ENCODE measurements at regions of chr7 and their contacts with region 1.

Region 1: DNA sequence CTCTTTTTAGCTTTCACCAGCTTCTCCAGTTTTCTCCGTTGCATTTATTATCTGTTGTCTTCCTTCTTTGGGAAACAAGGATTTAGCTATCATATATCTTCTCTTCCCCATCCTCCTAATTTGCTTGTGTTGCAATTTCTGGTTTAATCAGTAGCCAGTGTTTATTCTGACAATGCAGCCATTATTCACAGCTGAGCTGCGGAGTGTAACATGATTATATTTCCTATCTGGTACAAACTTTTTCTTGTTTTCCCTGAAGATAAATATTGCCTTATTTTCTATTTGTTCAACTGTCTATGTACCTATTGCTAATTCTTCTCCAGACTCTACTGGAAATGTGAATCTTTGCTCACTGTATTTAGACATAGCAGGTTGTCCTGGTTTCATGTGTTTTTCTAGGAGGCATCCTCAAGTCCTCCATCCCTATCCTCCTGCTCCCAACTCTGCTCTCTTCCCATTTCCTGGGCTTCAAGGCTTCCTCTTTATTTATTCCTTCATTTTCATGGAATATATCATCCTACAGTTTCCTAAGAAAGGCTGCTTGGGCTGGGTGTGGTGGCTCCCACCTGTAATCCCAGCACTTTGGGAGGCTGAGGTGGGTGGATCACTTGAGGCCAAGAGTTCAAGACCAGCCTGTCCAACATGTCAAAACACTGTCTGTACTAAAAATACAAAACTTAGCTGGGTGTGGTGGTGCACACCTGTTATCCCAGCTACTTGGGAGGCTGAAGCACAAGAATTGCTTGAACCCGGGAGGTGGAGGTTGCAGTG is 72.4 kb upstream of the KDM7A start:
- DNase-seq: no peak
- ATAC-seq: no peak
- H3K4me3 ChIP-seq: no peak overlapping the region
- H3K4me3 Mint-ChIP-seq: no peak overlapping the region
- H3K27ac ChIP-seq: no peak overlapping the region
- H3K27ac Mint-ChIP-seq: no peak overlapping the region
- H3K4me1 ChIP-seq: peaks cover 22% of the 10 kb centered on the region
- H3K4me1 Mint-ChIP-seq: peaks cover 23 to 24% of the 10 kb centered on the region in 2 donors
- H3K27me3 ChIP-seq: no peaks in the 10 kb centered on the region
- H3K27me3 Mint-ChIP-seq: peaks cover 0 to 3% of the 10 kb centered on the region in 2 donors
- CTCF ChIP-seq: no peak

Region 2: DNA sequence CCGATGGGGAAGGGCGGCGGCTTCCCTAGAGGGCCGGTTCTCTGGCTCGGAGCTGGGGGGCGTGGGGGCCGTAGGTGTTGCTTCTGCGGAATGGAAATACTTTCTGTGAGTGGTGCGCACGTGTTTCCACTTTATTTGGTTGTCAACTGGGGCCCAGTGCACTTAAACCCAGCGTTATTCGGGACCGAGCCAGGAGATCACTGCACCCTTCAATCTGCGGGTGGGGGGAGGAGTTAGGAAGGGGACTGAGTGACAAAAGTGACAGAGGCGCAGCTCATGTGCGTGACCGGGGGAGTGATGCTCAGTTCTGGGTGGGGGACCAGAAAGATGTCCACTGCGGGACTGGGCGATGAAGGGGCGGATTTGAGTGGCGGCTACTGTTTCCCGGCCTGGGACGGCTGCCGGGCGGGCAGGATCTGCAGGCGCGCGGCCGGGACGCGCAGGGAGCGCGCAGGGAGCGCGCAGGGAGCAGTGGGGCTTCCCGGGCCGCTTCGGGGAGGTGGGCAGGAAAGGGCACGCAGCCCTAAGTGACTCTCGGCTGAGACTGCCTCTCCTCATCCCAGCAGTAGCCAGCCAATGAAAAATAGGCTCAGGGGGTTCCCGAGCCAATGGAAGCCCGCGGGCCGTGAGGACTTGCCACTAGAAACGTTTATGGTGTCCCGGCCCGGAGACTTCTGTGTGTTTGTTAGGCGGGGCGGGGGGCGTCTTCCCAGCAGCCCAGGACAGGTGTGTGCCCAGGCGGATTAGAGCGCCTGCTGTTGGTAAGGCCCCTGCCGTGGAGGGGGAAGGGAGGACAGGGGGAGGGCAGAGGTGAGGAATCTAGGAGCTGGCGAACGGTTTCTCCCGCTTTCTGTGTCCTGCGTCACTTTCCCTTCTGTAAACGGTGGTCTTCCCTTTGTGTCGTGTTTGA is 18.1 kb before region 1 on chr7:
- intact Hi-C with region 1: loop called (anchors 2 kb)
- DNase-seq: peak; percentile 40 to 78
- ATAC-seq: peak; percentile 18 to 39 (median 35)
- H3K4me3 ChIP-seq: peak overlapping the region; percentile 55
- H3K4me3 Mint-ChIP-seq: peak overlapping the region; percentile 93
- H3K27ac ChIP-seq: peak overlapping the region; percentile 65
- H3K27ac Mint-ChIP-seq: peak overlapping the region; percentile 94 to 98
- H3K4me1 ChIP-seq: peaks cover 26% of the 10 kb centered on the region
- H3K4me1 Mint-ChIP-seq: peaks cover 27 to 34% of the 10 kb centered on the region in 2 donors
- H3K27me3 ChIP-seq: no peaks in the 10 kb centered on the region
- H3K27me3 Mint-ChIP-seq: peaks cover 0 to 3% of the 10 kb centered on the region in 2 donors
- CTCF ChIP-seq: no peak

Region 3: GRCh38 chr7:140262242-140262903 is 13.2 kb after region 1 on chr7:
- intact Hi-C with region 1: loop called (anchors 1 kb)
- DNase-seq: peak in 1 of 2 donors; percentile 28
- ATAC-seq: peak; percentile 58 to 85 (median 63)
- H3K4me3 ChIP-seq: no peak overlapping the region
- H3K4me3 Mint-ChIP-seq: peak overlapping the region; percentile 87
- H3K27ac ChIP-seq: no peak overlapping the region
- H3K27ac Mint-ChIP-seq: peak overlapping the region; percentile 52 to 93
- H3K4me1 ChIP-seq: peaks cover 17% of the 10 kb centered on the region
- H3K4me1 Mint-ChIP-seq: peaks cover 24 to 26% of the 10 kb centered on the region in 2 donors
- H3K27me3 ChIP-seq: no peaks in the 10 kb centered on the region
- H3K27me3 Mint-ChIP-seq: no peaks in the 10 kb centered on the region
- CTCF ChIP-seq: no peak

Region 4: DNA sequence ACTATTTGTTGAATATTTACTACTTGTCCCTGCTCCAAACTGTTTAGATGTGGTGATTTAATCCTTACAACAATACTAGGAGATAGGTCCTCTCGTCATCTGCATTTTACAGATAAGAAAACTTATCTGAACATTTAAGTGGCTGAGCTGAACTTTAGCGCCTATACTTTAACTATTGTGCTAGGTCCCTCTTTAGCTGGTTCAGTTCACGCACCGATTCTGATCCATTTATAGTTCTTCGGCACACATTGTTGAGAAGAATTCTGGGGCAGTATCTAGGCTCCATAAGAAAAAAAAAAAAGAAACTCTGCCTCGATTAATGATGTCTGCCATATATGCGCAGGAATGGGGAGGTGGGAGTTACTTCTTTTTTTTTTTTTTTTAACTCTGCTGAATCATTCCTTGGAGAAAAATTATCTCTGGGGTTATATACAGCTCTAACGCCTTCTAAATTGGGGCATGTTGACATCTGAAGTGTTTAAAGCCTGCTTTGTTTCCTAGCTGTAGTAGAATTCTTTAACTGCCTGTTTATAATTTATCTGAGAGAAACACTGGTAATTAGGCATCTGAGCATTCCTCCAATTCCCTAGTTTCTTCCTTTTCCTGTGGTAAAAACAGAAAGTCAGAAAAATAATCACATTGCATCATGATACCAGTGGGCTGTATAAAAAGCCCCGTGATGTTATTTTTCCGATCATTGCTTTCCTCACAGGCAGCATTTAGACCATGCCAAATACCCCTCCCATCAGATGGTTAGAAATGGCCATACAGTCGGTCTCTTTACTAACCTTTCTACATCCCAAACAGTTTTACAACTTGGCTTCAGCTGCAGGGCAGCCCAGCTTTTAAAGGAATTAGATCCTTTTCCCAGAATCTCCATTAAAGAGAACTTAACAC is 26.1 kb after region 1 on chr7:
- intact Hi-C with region 1: no loop called
- DNase-seq: no peak
- ATAC-seq: no peak
- H3K4me3 ChIP-seq: no peak overlapping the region
- H3K4me3 Mint-ChIP-seq: no peak overlapping the region
- H3K27ac ChIP-seq: no peak overlapping the region
- H3K27ac Mint-ChIP-seq: no peak overlapping the region
- H3K4me1 ChIP-seq: no peaks in the 10 kb centered on the region
- H3K4me1 Mint-ChIP-seq: no peaks in the 10 kb centered on the region
- H3K27me3 ChIP-seq: no peaks in the 10 kb centered on the region
- H3K27me3 Mint-ChIP-seq: peaks cover 0 to 2% of the 10 kb centered on the region in 2 donors
- CTCF ChIP-seq: no peak

Region 5: GRCh38 chr7:140289804-140290203 is 40.6 kb after region 1 on chr7:
- intact Hi-C with region 1: no loop called
- DNase-seq: no peak
- ATAC-seq: no peak
- H3K4me3 ChIP-seq: no peak overlapping the region
- H3K4me3 Mint-ChIP-seq: no peak overlapping the region
- H3K27ac ChIP-seq: no peak overlapping the region
- H3K27ac Mint-ChIP-seq: no peak overlapping the region
- H3K4me1 ChIP-seq: no peaks in the 10 kb centered on the region
- H3K4me1 Mint-ChIP-seq: no peaks in the 10 kb centered on the region
- H3K27me3 ChIP-seq: no peaks in the 10 kb centered on the region
- H3K27me3 Mint-ChIP-seq: no peaks in the 10 kb centered on the region
- CTCF ChIP-seq: no peak

Region 6: DNA sequence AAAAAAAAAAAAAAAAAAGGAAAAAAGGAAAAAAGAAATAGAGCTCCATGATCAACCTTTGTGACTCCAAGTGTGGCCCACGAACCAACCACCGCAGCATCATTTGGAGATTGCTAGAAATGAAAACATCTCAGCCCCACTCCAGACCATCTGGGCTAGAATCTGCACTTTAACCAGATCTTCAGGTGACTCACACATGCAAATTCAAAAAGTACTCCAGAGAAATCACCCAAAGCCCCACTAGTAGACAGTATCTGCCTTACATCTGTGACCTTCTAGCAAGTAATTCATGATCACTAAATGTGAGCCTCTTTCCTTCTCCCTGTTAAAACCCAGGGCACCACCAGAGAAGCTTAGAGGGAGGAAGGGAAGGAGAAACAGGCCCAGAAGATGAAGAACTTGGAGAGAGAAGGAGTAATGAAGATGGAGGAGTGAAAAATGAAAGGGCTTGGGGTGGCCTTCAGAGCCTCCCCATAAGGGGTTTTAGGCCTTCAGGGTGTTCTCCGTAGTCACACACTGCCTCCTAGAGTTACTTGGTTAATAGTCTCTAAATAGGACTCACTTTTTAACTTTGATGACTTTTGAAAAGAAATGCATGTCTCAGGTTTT is 55.1 kb after region 1 on chr7:
- intact Hi-C with region 1: no loop called
- DNase-seq: peak in 1 of 2 donors; percentile 79
- ATAC-seq: peak; percentile 87 to 98 (median 92)
- H3K4me3 ChIP-seq: no peak overlapping the region
- H3K4me3 Mint-ChIP-seq: no peak overlapping the region
- H3K27ac ChIP-seq: peak overlapping the region; percentile 5
- H3K27ac Mint-ChIP-seq: no peak overlapping the region
- H3K4me1 ChIP-seq: peaks cover 8% of the 10 kb centered on the region
- H3K4me1 Mint-ChIP-seq: peaks cover 6 to 8% of the 10 kb centered on the region in 2 donors
- H3K27me3 ChIP-seq: no peaks in the 10 kb centered on the region
- H3K27me3 Mint-ChIP-seq: peaks cover 0 to 8% of the 10 kb centered on the region in 2 donors
- CTCF ChIP-seq: peak; percentile 44